ENCODE measurements at regions of chrX and their contacts with region 1.

Region 1: GRCh38 chrX:39859991-39860861 is 237.5 kb downstream of the BCOR start:
- DNase-seq: peak; percentile 79
- H3K4me3 Mint-ChIP-seq: peak overlapping the region; percentile 70
- H3K27ac Mint-ChIP-seq: peak overlapping the region; percentile 98
- H3K4me1 Mint-ChIP-seq: peaks cover 60% of the 10 kb centered on the region
- H3K27me3 Mint-ChIP-seq: no peaks in the 10 kb centered on the region

Region 2: DNA sequence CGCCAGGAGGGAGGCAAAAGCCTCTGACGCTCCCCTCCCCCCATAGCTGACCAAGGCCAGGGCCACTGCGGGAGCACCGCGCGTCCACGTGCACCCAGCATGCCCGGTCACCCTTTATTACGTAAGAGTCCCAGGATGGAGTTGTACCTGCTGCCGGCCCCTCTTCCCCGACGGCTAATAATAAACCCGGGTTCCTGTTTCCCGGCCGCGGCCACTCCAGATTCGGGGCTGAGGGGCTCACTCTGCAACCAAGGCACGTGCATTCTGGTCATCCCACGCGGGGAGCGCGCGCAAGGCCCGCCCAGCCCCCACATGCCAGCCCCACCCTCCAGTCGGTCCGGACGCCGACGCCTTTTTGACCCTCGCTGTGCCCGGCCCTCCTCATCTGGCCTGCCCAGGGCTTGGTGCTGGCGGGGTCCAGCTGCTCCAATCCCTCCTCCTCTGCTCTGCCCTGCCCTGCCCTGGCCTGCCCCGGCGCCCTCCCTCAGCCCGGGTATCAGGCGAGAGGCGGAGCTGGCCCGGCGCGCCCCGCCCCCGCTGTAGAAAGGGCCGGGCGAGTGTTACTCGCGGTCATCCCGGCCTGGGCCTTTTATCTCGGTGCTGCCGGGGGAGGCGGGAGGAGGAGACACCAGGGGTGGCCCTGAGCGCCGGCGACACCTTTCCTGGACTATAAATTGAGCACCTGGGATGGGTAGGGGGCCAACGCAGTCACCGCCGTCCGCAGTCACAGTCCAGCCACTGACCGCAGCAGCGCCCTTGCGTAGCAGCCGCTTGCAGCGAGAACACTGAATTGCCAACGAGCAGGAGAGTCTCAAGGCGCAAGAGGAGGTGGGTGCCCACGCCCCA is 1056.4 kb before region 1 on chrX:
- intact Hi-C with region 1: loop called (anchors 5 kb)
- DNase-seq: peak; percentile 69
- H3K4me3 Mint-ChIP-seq: peak overlapping the region; percentile 89
- H3K27ac Mint-ChIP-seq: peak overlapping the region; percentile 91
- H3K4me1 Mint-ChIP-seq: peaks cover 15% of the 10 kb centered on the region
- H3K27me3 Mint-ChIP-seq: no peaks in the 10 kb centered on the region

Region 3: DNA sequence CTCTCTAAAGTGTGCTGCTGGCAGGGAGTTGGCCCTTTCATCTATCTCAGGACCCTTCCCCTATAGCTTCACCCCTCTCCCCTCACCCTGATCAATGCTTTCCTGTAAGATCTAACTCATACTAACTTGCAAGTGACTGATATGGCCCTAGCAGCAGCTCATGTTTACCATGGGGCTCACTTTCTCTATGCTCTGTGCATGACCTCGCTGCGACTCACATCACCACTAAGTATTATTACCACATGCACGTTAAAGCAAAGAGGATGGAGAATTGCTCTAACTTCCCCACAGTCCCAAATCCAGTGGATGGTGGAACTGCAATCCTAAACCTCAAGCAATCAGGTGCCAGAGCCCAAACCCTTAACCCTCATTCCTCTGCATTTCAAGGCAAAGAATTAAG is 432.3 kb before region 1 on chrX:
- intact Hi-C with region 1: loop called (anchors 5 kb)
- DNase-seq: no peak
- H3K4me3 Mint-ChIP-seq: no peak overlapping the region
- H3K27ac Mint-ChIP-seq: peak overlapping the region; percentile 98
- H3K4me1 Mint-ChIP-seq: peaks cover 58% of the 10 kb centered on the region
- H3K27me3 Mint-ChIP-seq: no peaks in the 10 kb centered on the region

Region 4: DNA sequence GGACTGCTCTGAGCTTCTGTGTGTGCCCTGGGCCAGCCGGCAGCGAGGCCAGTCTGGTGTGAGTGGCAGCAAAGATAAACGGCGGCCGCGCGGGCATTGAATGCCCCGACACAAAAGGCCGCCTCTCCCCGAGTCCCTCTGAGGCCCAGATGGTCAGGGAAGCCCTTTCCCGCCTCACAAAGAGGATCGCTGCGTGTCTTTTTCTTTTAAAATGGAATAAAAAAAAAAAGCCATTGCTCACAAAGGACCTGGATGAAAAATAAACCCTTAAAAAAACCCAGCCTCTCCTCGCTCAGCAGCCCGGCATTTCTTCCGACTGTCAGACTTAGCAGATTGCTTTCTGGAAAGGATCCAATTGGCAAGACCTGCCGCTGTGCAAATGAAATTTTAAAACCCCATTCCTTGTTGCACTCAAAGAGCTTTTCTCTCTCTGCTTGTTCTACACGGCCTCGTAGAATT is 341.2 kb before region 1 on chrX:
- intact Hi-C with region 1: no loop called
- DNase-seq: no peak
- H3K4me3 Mint-ChIP-seq: no peak overlapping the region
- H3K27ac Mint-ChIP-seq: no peak overlapping the region
- H3K4me1 Mint-ChIP-seq: no peaks in the 10 kb centered on the region
- H3K27me3 Mint-ChIP-seq: no peaks in the 10 kb centered on the region

Region 5: GRCh38 chrX:39772057-39772832 is 88.0 kb before region 1 on chrX:
- intact Hi-C with region 1: loop called (anchors 1 kb)
- DNase-seq: peak; percentile 22
- H3K4me3 Mint-ChIP-seq: peak overlapping the region; percentile 73
- H3K27ac Mint-ChIP-seq: peak overlapping the region; percentile 98
- H3K4me1 Mint-ChIP-seq: peaks cover 48% of the 10 kb centered on the region
- H3K27me3 Mint-ChIP-seq: no peaks in the 10 kb centered on the region

Region 6: GRCh38 chrX:39883666-39884065 is 23.4 kb after region 1 on chrX:
- intact Hi-C with region 1: loop called (anchors 1 kb)
- DNase-seq: peak; percentile 12
- H3K4me3 Mint-ChIP-seq: peak overlapping the region; percentile 58
- H3K27ac Mint-ChIP-seq: peak overlapping the region; percentile 88
- H3K4me1 Mint-ChIP-seq: peaks cover 28% of the 10 kb centered on the region
- H3K27me3 Mint-ChIP-seq: peaks cover 9% of the 10 kb centered on the region

Region 7: DNA sequence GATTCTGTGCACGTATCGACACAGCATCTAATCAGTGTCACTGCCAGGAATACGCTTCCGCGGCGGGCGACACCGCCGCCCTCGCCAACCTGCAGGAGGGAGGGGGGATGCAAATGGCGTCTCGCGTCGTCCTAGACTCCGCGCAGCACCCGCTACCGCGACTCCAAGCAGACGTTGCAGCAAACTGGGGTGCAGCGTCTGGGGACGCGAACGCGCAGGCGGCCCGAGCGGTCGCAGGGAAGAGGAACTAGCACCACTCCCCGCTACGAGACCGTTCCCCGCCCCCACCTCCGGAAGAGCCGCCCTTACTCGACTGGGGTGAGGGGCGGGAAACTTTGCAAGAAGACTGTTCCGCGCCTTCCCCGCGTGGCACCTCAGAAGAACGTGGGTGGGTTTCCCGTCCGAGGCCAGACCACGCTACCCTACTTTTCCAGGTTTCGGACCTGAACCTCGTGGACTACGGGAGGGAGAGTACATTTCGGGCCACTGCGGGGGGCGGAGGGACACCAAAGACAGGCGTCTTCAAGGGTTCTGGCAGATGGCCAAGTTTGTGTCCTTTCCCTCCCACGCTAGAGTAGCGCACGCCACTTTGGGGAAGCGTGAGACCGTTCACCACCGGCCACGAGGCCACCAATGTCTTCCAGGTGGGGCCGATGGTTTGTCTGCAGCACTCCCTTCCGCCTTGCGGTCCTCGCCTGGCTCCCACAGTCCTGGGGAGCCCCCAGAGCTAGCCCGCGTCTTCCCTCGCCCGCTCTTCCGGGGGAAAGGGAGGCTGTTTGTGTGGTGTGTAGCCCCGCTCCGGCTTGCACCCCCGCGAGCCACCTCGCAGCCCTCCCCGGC is 315.5 kb after region 1 on chrX:
- intact Hi-C with region 1: loop called (anchors 1 kb)
- DNase-seq: peak; percentile 61
- H3K4me3 Mint-ChIP-seq: peak overlapping the region; percentile 82
- H3K27ac Mint-ChIP-seq: peak overlapping the region; percentile 99
- H3K4me1 Mint-ChIP-seq: peaks cover 37% of the 10 kb centered on the region
- H3K27me3 Mint-ChIP-seq: no peaks in the 10 kb centered on the region

Measured in activated T-helper 1 cell treated with anti-CD3 and anti-CD28 coated beads, Interleukin-12 subunit alpha, Interleukin-12 subunit beta, Interleukin-2, Interleukin-4 antibody, amounts not matched to agents 30 ng/mL and 10 ng/mL and 1 ng/mL, durations not matched to agents 14 hours and 24 hours and 36 hours (primary cell).